HepG2 (cell line): ENCODE measurements at regions of chr10 and their contacts with region 1.

Region 1: GRCh38 chr10:59181668-59182067 is 5.2 kb downstream of the PHYHIPL start:
- DNase-seq: peak; percentile 88
- ATAC-seq: peak; percentile 64
- H3K4me3 ChIP-seq: peak overlapping the region; percentile 67 to 89 (median 74)
- H3K27ac ChIP-seq: peak overlapping the region; percentile 51
- H3K4me1 ChIP-seq: peaks cover 31% of the 10 kb centered on the region
- H3K27me3 ChIP-seq: no peaks in the 10 kb centered on the region; a peak in 1 of 5 replicates
- CTCF ChIP-seq: peak; percentile 83
- EP300 ChIP-seq: 0 out of 4 replicates have a peak, but pooled peaks of 1 of the 2 experiments have one; percentile 8
- POLR2A ChIP-seq: no peak
- RAD21 ChIP-seq: peak; percentile 79

Region 2: DNA sequence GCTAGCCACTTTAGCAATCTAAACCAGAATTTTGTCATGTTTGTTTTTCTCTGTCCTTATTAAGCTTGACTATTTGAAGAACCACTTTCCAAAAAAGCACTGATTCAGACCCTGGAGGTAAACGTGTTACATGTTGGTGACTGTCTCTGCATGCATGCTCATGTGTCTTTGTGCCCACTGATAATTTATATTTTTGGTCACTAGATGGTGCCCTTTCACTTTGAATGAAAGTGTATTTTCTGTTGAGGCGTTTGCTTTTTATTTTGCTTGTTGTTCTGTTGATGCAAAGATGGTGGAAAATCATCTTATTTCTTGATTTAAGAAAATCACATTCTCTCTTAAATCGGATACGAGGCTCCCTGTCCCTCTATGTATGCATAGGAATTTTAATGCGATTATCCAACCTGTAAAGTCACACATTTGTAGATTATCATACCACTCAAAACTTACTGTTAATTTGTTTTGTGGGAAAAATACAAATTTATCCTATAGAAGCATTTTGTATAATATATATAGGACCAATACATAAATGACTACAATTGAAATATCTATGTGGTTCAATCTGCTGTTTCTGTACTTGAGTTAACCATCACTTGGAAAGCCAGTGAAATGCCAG is 399.7 kb before region 1 on chr10:
- CTCF ChIA-PET with region 1: no interaction called
- POLR2A ChIA-PET with region 1: no interaction called
- in situ Hi-C with region 1: no loop called
- intact Hi-C with region 1: loop called (anchors 5 kb)
- DNase-seq: peak; percentile 42
- ATAC-seq: peak; percentile 72
- H3K4me3 ChIP-seq: no peak overlapping the region
- H3K27ac ChIP-seq: no peak overlapping the region
- H3K4me1 ChIP-seq: peaks cover 8% of the 10 kb centered on the region; the same call in 1 of the 2 replicates
- H3K27me3 ChIP-seq: no peaks in the 10 kb centered on the region
- CTCF ChIP-seq: peak; percentile 75
- EP300 ChIP-seq: no peak
- POLR2A ChIP-seq: no peak
- RAD21 ChIP-seq: peak; percentile 39; the same call in 1 of the 2 replicates

Region 3: DNA sequence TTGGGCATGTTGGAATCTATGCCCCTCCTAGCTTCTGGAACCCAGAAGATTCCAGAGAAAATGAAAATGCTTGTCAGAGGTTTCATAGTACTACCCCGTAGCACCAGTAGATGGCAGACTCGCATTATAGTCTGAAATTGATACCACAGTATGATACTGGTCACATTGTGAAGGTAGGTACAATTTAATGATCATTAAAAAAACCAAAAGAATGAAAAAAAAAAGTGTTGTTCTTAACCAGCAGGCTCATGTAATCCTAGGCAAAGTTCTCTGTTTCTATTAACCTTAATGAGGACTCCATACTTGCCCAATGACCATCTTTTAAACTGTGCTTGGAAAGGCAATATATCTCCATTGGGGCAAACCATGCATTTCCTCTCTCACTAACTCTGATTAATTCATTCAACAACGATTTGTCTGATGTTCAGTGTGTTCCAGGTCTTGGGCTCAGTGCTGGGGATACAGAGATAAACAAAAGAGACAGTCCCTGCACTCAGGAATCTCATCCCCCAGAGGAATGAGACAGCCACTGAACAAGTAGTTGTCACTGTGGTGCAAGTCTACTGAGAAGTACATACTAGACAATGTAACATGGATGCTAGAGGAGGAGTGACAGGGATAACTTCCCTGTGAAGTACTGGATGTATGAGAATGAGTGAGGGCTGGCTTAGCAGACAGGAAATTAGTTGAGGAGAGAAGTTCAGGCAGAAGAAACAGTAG is 228.8 kb before region 1 on chr10:
- CTCF ChIA-PET with region 1: interaction called, 28 read pairs
- POLR2A ChIA-PET with region 1: interaction called, 7 read pairs
- in situ Hi-C with region 1: no loop called
- intact Hi-C with region 1: loop called (anchors 1 kb)
- DNase-seq: peak; percentile 53
- ATAC-seq: peak; percentile 86
- H3K4me3 ChIP-seq: no peak overlapping the region
- H3K27ac ChIP-seq: no peak overlapping the region
- H3K4me1 ChIP-seq: peaks cover 58% of the 10 kb centered on the region
- H3K27me3 ChIP-seq: no peaks in the 10 kb centered on the region
- CTCF ChIP-seq: peak; percentile 82
- EP300 ChIP-seq: no peak
- POLR2A ChIP-seq: no peak
- RAD21 ChIP-seq: peak; percentile 87

Region 4: GRCh38 chr10:58993480-58994221 is 188.0 kb before region 1 on chr10:
- CTCF ChIA-PET with region 1: no interaction called
- POLR2A ChIA-PET with region 1: interaction called, 13 read pairs
- in situ Hi-C with region 1: no loop called
- intact Hi-C with region 1: no loop called
- DNase-seq: no peak
- ATAC-seq: no peak
- H3K4me3 ChIP-seq: peak overlapping the region in 1 of 3 experiments; percentile 23; a peak in 1 of 6 replicates
- H3K27ac ChIP-seq: peak overlapping the region; percentile 89
- H3K4me1 ChIP-seq: peaks cover 96% of the 10 kb centered on the region
- H3K27me3 ChIP-seq: no peaks in the 10 kb centered on the region
- CTCF ChIP-seq: no peak
- EP300 ChIP-seq: no peak
- POLR2A ChIP-seq: no peak
- RAD21 ChIP-seq: no peak

Region 5: GRCh38 chr10:59036311-59037017 is 145.2 kb before region 1 on chr10:
- CTCF ChIA-PET with region 1: no interaction called
- POLR2A ChIA-PET with region 1: interaction called, 18 read pairs
- in situ Hi-C with region 1: no loop called
- intact Hi-C with region 1: no loop called
- DNase-seq: peak; percentile 75
- ATAC-seq: peak; percentile 94
- H3K4me3 ChIP-seq: peak overlapping the region in 1 of 3 experiments; percentile 29; a peak in 1 of 6 replicates
- H3K27ac ChIP-seq: peak overlapping the region; percentile 87
- H3K4me1 ChIP-seq: peaks cover 66% of the 10 kb centered on the region
- H3K27me3 ChIP-seq: no peaks in the 10 kb centered on the region
- CTCF ChIP-seq: no peak
- EP300 ChIP-seq: 0 out of 4 replicates have a peak, but pooled peaks of 1 of the 2 experiments have one; percentile 14
- POLR2A ChIP-seq: no peak
- RAD21 ChIP-seq: no peak

Region 6: GRCh38 chr10:59073456-59074053 is 108.1 kb before region 1 on chr10:
- CTCF ChIA-PET with region 1: no interaction called
- POLR2A ChIA-PET with region 1: interaction called, 56 read pairs
- in situ Hi-C with region 1: loop called (anchors 10 kb)
- intact Hi-C with region 1: loop called (anchors 2 kb)
- DNase-seq: peak; percentile 99
- ATAC-seq: peak; percentile 98
- H3K4me3 ChIP-seq: no peak overlapping the region; a peak in 1 of 6 replicates
- H3K27ac ChIP-seq: peak overlapping the region; percentile 90
- H3K4me1 ChIP-seq: peaks cover 83% of the 10 kb centered on the region
- H3K27me3 ChIP-seq: no peaks in the 10 kb centered on the region
- CTCF ChIP-seq: no peak
- EP300 ChIP-seq: peak; percentile 97 to 100
- POLR2A ChIP-seq: peak in 1 of 2 experiments; percentile 39; a peak in 1 of 4 replicates
- RAD21 ChIP-seq: peak; percentile 36; the same call in 1 of the 2 replicates

Region 7: DNA sequence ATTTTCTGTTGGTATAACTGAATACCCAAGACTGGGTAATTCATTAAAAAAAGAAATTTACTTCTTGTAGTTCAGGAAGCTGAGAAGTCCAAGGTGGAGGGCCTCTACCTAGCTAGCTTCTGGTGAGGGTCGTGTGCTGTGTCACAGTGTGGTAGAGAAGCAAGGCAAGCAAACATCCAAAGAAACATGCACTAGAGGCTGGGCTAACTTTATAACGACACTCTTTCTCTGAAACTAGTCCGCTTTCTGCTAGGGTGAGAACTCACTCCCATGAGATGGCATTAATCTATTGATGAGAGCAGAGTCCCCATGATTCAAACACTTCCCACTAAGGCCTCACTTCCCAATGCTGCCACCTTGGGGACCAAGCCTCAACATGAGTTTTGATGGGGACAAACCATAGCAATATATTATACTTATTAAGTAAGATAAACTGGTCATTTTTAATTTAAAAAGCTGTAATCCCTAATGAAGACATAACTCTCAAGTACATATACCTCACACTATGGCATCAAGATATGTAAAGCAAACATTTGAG is 45.5 kb after region 1 on chr10:
- CTCF ChIA-PET with region 1: no interaction called
- POLR2A ChIA-PET with region 1: no interaction called
- in situ Hi-C with region 1: no loop called
- intact Hi-C with region 1: loop called (anchors 5 kb)
- DNase-seq: no peak
- ATAC-seq: peak; percentile 54
- H3K4me3 ChIP-seq: no peak overlapping the region
- H3K27ac ChIP-seq: no peak overlapping the region
- H3K4me1 ChIP-seq: peaks cover 33% of the 10 kb centered on the region
- H3K27me3 ChIP-seq: no peaks in the 10 kb centered on the region
- CTCF ChIP-seq: 0 out of 2 replicates have a peak, but pooled peaks have one; percentile 20
- EP300 ChIP-seq: no peak
- POLR2A ChIP-seq: no peak
- RAD21 ChIP-seq: no peak